ENCODE measurements at regions of chr3 and their contacts with region 1.

Region 1: DNA sequence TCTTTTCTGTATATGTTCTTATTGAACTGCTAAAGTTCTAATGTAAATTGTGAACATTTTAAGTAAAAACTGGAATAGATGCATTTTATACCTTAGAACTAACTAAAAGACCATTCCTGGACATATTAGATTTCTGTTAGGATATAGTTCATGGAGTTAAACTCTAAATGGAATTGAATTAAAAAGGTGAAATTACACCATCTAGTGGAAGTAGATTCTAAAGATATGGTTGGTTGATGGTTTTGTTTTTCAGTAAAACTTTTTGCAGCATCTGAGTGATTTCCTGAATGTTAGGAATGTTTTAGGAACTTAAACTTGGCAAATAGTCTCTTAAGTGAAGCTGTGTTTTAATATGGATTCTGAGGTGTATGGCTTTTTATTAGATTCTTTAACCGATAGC is 96.8 kb downstream of the SLMAP start:
- DNase-seq: no peak
- H3K4me3 ChIP-seq: no peak overlapping the region
- H3K27ac ChIP-seq: no peak overlapping the region
- H3K4me1 ChIP-seq: no peaks in the 10 kb centered on the region
- H3K27me3 ChIP-seq: no peaks in the 10 kb centered on the region
- CTCF ChIP-seq: peak in 2 of 3 experiments; percentile 33 to 51

Region 2: DNA sequence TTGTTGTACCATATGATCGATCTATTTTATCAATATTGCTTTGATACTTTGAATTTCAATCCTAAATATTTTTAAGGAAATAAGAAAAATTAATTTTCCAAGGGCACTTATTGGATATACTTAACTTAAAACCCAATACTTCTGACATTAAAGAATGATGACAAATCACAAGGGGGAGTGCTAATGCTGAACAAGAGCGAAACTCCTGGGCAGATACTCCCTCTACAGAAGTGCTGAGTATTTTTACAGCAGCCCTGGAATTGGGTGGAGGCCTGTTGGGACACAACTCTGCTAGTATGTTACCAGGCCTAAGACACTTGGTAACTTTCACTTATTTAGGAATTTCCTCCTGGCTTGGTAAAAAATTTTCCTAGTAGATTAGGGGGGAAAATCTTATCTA is 206.2 kb before region 1 on chr3:
- intact Hi-C with region 1: loop called (anchors 10 kb)
- DNase-seq: no peak
- H3K4me3 ChIP-seq: no peak overlapping the region
- H3K27ac ChIP-seq: no peak overlapping the region
- H3K4me1 ChIP-seq: no peaks in the 10 kb centered on the region
- H3K27me3 ChIP-seq: no peaks in the 10 kb centered on the region
- CTCF ChIP-seq: peak in 1 of 3 experiments; percentile 2

Region 3: DNA sequence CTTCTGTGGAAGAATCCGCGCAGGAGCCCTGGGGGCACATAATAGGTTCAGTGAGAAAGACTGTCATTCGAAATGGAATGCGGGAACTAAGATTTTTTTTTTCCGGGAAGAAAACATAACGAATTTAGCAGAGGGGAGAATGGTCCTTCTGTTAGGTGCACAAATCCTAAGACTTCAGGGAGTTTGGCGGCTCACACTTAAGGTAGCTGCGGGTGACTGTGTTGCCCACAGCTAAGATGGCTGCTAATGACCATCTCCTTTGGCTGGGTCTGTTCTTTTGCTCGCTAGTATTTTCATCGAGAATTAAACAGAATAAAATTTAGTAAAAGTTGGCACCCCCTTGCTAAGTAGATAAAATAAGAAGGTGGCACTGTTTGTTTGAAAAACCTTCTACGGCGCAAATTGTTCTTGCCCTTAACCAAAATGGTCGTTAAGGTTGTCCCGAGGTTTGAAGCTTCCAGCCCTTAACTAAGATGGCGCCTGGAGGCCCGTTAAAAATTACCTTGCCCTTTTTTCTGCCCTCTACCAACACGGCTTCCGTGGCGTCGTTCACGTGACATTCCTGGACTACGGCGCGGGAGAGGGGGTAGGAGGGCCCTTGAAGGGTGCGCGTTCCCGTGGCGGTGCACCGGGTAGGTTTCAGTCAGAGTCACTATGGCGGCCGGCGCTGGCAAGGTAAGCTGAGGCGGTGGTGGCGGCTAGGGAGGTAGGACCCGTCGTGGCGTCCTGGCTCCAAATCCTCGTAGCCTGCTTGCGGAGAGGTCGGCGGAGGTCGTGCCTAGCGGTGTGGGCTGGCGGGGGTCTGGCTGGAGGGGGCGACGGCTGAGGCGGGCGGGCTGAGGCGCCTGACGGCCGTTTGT is 97.0 kb before region 1 on chr3 and contains the start of gene SLMAP:
- intact Hi-C with region 1: loop called (anchors 5 kb)
- DNase-seq: peak; percentile 92 to 98
- H3K4me3 ChIP-seq: peak within 1 kb of the TSS; percentile 89 to 90
- H3K27ac ChIP-seq: peak within 1 kb of the TSS; percentile 87
- H3K4me1 ChIP-seq: peaks cover 16 to 19% of the 10 kb centered on the region in 2 donors
- H3K27me3 ChIP-seq: no peaks in the 10 kb centered on the region
- CTCF ChIP-seq: no peak
- total RNA-seq, gene SLMAP: 502 TPM

Region 4: GRCh38 chr3:58497097-58497496 is 644.2 kb after region 1 on chr3:
- intact Hi-C with region 1: no loop called
- DNase-seq: no peak
- H3K4me3 ChIP-seq: no peak overlapping the region
- H3K27ac ChIP-seq: no peak overlapping the region
- H3K4me1 ChIP-seq: peaks cover 0 to 32% of the 10 kb centered on the region in 2 donors
- H3K27me3 ChIP-seq: no peaks in the 10 kb centered on the region
- CTCF ChIP-seq: no peak

Measured in ascending aorta (tissue), 2 donors.